ENCODE measurements at regions of chr6 and their contacts with region 1.

Region 1: GRCh38 chr6:106477790-106478189 is 117.3 kb downstream of the CRYBG1 start:
- DNase-seq: no peak
- H3K4me3 ChIP-seq: no peak overlapping the region
- H3K27ac ChIP-seq: no peak overlapping the region
- H3K4me1 ChIP-seq: peaks cover 0 to 3% of the 10 kb centered on the region in 2 donors
- H3K27me3 ChIP-seq: no peaks in the 10 kb centered on the region
- CTCF ChIP-seq: no peak
- POLR2A ChIP-seq: no peak

Region 2: DNA sequence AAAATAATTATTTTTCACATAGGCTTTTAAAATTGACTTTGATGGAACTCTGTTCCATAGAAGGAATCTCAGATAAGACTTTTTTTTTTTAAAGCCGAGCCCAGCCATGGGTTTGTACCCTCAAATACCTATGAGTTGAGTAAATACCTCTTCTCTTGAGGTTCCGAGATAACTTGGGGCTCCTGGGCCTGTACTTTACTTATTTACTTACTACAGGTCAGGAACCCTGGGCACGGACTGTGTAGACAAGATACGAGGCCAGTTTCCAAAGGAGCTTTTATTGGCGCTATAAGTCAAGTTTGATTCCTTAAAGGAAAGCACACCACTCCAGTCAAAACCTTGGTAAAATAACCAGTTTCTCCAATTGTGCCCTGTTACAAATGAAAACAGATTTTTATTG is 1824.6 kb after region 1 on chr6:
- intact Hi-C with region 1: loop called (anchors 10 kb)
- DNase-seq: no peak
- H3K4me3 ChIP-seq: no peak overlapping the region
- H3K27ac ChIP-seq: no peak overlapping the region
- H3K4me1 ChIP-seq: no peaks in the 10 kb centered on the region
- H3K27me3 ChIP-seq: no peaks in the 10 kb centered on the region
- CTCF ChIP-seq: no peak
- POLR2A ChIP-seq: no peak

Measured in breast epithelium (tissue), 4 donors.